ENCODE measurements at regions of chr9 and their contacts with region 1.

Region 1: GRCh38 chr9:108053555-108054061 is 564.0 kb upstream of the KLF4 start:
- DNase-seq: peak; percentile 75
- H3K4me3 ChIP-seq: no peak overlapping the region
- H3K27ac ChIP-seq: peak overlapping the region; percentile 23
- H3K4me1 ChIP-seq: peaks cover 55% of the 10 kb centered on the region
- H3K27me3 ChIP-seq: no peaks in the 10 kb centered on the region
- CTCF ChIP-seq: no peak
- POLR2A ChIP-seq: no peak

Region 2: GRCh38 chr9:107644733-107645463 is 408.7 kb before region 1 on chr9:
- CTCF ChIA-PET with region 1: no interaction called
- POLR2A ChIA-PET with region 1: no interaction called
- dilution Hi-C with region 1: no loop called
- intact Hi-C with region 1: loop called (anchors 2 kb)
- DNase-seq: peak; percentile 86
- H3K4me3 ChIP-seq: no peak overlapping the region
- H3K27ac ChIP-seq: peak overlapping the region; percentile 6
- H3K4me1 ChIP-seq: peaks cover 10% of the 10 kb centered on the region
- H3K27me3 ChIP-seq: peaks cover 0 to 1% of the 10 kb centered on the region in 2 experiments
- CTCF ChIP-seq: no peak
- POLR2A ChIP-seq: no peak

Region 3: DNA sequence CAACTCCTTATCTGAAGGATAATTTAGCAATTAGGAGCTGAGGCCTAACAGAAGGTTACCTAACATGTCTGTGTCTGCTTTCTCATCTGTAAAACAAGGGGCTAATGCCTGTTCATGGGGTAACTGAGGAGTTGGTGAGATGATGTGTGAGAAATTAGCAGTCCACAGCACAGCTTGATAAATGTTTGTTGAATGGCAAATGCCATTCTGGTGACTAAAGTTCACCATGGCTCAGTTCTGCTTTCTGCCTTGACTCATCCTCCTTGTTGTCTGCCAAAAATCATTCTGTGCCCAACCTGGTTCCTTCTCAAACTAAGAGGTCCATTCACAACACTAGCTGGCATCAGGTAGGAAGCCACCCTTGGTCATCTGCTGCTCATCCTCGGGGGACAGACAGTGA is 12.1 kb before region 1 on chr9:
- CTCF ChIA-PET with region 1: interaction called, 17 read pairs
- POLR2A ChIA-PET with region 1: no interaction called
- dilution Hi-C with region 1: no loop called
- intact Hi-C with region 1: no loop called
- DNase-seq: no peak
- H3K4me3 ChIP-seq: no peak overlapping the region
- H3K27ac ChIP-seq: peak overlapping the region; percentile 13
- H3K4me1 ChIP-seq: peaks cover 12% of the 10 kb centered on the region
- H3K27me3 ChIP-seq: no peaks in the 10 kb centered on the region
- CTCF ChIP-seq: no peak
- POLR2A ChIP-seq: no peak

Region 4: DNA sequence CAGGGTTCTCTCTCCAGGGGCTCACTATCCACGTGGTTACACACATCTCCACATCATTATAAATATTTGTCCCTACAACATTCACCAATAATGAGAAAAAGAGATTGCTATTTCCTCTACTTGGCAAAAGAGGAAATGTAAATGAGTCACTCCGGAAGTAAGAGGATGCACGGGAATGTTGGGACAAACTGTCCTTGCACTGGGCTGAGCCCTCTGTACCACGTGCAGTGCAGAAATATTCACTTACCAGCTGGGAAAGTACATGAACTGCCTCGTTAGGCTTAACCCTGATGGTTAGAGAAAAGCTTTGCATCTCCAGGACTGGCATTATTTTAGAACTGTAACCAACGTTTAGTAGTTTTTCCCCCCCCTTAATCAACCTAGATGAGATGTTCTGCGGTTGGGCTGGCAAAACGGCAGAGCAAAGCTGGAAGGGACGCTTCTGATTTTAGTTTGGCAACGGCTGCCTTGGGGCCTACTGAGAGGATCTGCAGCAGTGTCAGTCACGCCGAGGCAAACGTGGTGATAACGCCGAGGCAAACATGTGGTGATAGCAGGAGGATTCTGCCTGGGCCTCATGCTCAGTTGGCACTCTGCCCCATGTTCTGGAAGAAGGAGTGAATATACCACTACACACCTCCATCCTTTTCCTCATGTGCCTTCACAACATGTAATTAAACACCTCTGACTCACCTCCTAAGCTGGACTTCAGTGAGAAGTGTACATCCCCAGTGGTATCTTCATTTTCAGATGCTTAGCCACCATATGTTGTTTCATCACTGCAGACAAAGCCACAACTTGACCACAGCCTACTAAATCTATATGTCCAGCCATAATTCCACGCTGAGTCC is 97.4 kb after region 1 on chr9:
- CTCF ChIA-PET with region 1: no interaction called
- POLR2A ChIA-PET with region 1: no interaction called
- dilution Hi-C with region 1: no loop called
- intact Hi-C with region 1: loop called (anchors 1 kb)
- DNase-seq: peak; percentile 87
- H3K4me3 ChIP-seq: no peak overlapping the region
- H3K27ac ChIP-seq: peak overlapping the region; percentile 83
- H3K4me1 ChIP-seq: peaks cover 28% of the 10 kb centered on the region
- H3K27me3 ChIP-seq: no peaks in the 10 kb centered on the region
- CTCF ChIP-seq: no peak
- POLR2A ChIP-seq: no peak

Measured in endothelial cell of umbilical vein (primary cell).